ENCODE measurements at regions of chr9 and their contacts with region 1.

Region 1: DNA sequence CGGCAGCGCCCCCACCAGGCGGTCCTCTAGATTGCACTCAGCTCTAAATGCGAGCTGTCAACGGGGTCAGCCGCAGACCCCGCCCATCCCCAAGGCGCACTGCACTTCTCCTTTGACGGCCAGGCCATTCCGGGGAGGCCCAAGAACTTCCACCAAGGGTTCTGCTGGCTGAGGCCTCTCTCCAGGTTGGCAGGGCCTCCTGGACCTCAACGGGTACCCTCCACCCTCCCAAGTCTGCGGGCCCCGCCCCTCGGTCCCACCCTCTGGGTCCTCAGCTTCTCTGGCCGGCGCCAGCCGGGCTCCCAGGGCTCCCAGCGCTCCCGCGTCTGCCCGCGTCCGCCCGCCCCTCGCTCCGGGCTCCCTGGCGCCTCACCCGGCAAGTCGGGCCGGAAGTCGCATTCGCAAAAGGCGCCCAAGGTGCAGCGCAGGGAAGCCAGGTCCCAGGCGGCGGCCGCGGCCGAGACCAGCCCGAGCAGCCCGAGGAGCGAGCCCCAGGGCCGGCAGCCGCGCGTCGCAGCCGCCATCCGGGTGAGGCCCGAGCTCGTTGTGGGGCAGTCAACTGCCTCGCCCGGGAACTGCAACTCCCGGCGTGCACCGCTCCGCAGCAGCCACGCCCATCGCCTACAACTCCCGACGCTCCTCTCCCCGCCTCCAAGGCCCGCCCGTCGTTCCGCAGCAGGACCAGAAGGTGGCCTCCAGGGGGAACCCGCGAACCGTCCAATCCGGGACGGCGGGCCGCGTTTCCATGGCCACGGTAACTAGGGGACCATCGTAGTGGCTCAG is at the start of gene TOR2A:
- DNase-seq: peak; percentile 96 to 98
- H3K4me3 ChIP-seq: peak within 1 kb of the TSS; percentile 69
- H3K4me3 Mint-ChIP-seq: peak within 1 kb of the TSS; percentile 68
- H3K27ac Mint-ChIP-seq: no peak within 1 kb of the TSS
- H3K4me1 ChIP-seq: no peaks in the 10 kb centered on the region
- H3K4me1 Mint-ChIP-seq: no peaks in the 10 kb centered on the region
- H3K27me3 ChIP-seq: no peaks in the 10 kb centered on the region; the same call in 1 of the 2 replicates
- H3K27me3 Mint-ChIP-seq: peaks cover 10% of the 10 kb centered on the region
- CTCF ChIP-seq: peak; percentile 92
- total RNA-seq, gene TOR2A: 12.9 and 14.2 TPM in 2 replicates

Region 2: GRCh38 chr9:127503947-127504782 is 230.8 kb before region 1 on chr9:
- CTCF ChIA-PET with region 1: interaction called, 6 read pairs
- POLR2A ChIA-PET with region 1: no interaction called
- intact Hi-C with region 1: loop called (anchors 2 kb)
- DNase-seq: peak; percentile 87
- H3K4me3 ChIP-seq: no peak overlapping the region
- H3K4me3 Mint-ChIP-seq: no peak overlapping the region
- H3K27ac Mint-ChIP-seq: no peak overlapping the region
- H3K4me1 ChIP-seq: no peaks in the 10 kb centered on the region
- H3K4me1 Mint-ChIP-seq: no peaks in the 10 kb centered on the region
- H3K27me3 ChIP-seq: no peaks in the 10 kb centered on the region
- H3K27me3 Mint-ChIP-seq: no peaks in the 10 kb centered on the region
- CTCF ChIP-seq: peak; percentile 90 to 94

Region 3: GRCh38 chr9:127608104-127608966 is 126.6 kb before region 1 on chr9:
- CTCF ChIA-PET with region 1: interaction called, 20 read pairs
- POLR2A ChIA-PET with region 1: interaction called, 3 read pairs
- intact Hi-C with region 1: no loop called
- DNase-seq: peak; percentile 89
- H3K4me3 ChIP-seq: peak overlapping the region; percentile 48
- H3K4me3 Mint-ChIP-seq: peak overlapping the region; percentile 85
- H3K27ac Mint-ChIP-seq: no peak overlapping the region
- H3K4me1 ChIP-seq: peaks cover 8% of the 10 kb centered on the region; the same call in 1 of the 2 replicates
- H3K4me1 Mint-ChIP-seq: peaks cover 11% of the 10 kb centered on the region
- H3K27me3 ChIP-seq: peaks cover 2% of the 10 kb centered on the region
- H3K27me3 Mint-ChIP-seq: peaks cover 18% of the 10 kb centered on the region
- CTCF ChIP-seq: no peak

Region 4: GRCh38 chr9:127754099-127755050 is 19.4 kb after region 1 on chr9:
- CTCF ChIA-PET with region 1: interaction called, 10 read pairs
- POLR2A ChIA-PET with region 1: no interaction called
- intact Hi-C with region 1: no loop called
- DNase-seq: no peak
- H3K4me3 ChIP-seq: peak overlapping the region; percentile 14
- H3K4me3 Mint-ChIP-seq: peak overlapping the region; percentile 24
- H3K27ac Mint-ChIP-seq: no peak overlapping the region
- H3K4me1 ChIP-seq: 0 out of 2 replicates have a peak, but pooled peaks cover 3% of the 10 kb centered on the region
- H3K4me1 Mint-ChIP-seq: no peaks in the 10 kb centered on the region
- H3K27me3 ChIP-seq: peaks cover 2% of the 10 kb centered on the region
- H3K27me3 Mint-ChIP-seq: peaks cover 18% of the 10 kb centered on the region
- CTCF ChIP-seq: no peak

Region 5: GRCh38 chr9:127802576-127803443 is 67.9 kb after region 1 on chr9 and contains the start of gene FPGS:
- CTCF ChIA-PET with region 1: interaction called, 14 read pairs
- POLR2A ChIA-PET with region 1: no interaction called
- intact Hi-C with region 1: no loop called
- DNase-seq: peak; percentile 89 to 90
- H3K4me3 ChIP-seq: peak within 1 kb of the TSS; percentile 86
- H3K4me3 Mint-ChIP-seq: peak within 1 kb of the TSS; percentile 86
- H3K27ac Mint-ChIP-seq: peak within 1 kb of the TSS; percentile 77
- H3K4me1 ChIP-seq: peaks cover 26% of the 10 kb centered on the region
- H3K4me1 Mint-ChIP-seq: peaks cover 14% of the 10 kb centered on the region
- H3K27me3 ChIP-seq: no peaks in the 10 kb centered on the region
- H3K27me3 Mint-ChIP-seq: no peaks in the 10 kb centered on the region
- CTCF ChIP-seq: peak in 1 of 2 experiments; percentile 4
- total RNA-seq, gene FPGS: 54.4 and 57.3 TPM in 2 replicates

Region 6: DNA sequence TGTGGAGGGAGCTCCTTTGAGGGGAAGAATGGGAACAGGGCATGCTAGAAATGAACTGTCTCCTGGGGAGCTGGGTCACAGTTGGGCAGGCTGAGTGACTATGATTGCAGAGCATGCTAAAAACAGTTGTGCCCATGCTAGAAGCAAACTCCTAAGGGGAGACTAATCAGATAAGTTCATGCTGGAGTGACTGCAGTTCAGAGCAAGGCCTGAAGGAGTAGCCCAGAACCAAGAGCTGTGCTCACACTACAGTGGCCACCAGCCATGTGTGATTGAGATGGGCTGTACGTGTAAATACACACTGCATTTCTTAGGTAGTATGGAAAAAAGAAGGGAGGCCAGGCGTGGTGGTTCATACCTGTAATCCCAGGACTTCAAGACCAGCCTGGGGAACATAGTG is 152.9 kb after region 1 on chr9:
- CTCF ChIA-PET with region 1: no interaction called
- POLR2A ChIA-PET with region 1: no interaction called
- intact Hi-C with region 1: no loop called
- DNase-seq: no peak
- H3K4me3 ChIP-seq: no peak overlapping the region
- H3K4me3 Mint-ChIP-seq: no peak overlapping the region
- H3K27ac Mint-ChIP-seq: no peak overlapping the region
- H3K4me1 ChIP-seq: no peaks in the 10 kb centered on the region
- H3K4me1 Mint-ChIP-seq: peaks cover 7% of the 10 kb centered on the region
- H3K27me3 ChIP-seq: no peaks in the 10 kb centered on the region
- H3K27me3 Mint-ChIP-seq: no peaks in the 10 kb centered on the region
- CTCF ChIP-seq: peak in 1 of 2 experiments; percentile 14

Region 7: DNA sequence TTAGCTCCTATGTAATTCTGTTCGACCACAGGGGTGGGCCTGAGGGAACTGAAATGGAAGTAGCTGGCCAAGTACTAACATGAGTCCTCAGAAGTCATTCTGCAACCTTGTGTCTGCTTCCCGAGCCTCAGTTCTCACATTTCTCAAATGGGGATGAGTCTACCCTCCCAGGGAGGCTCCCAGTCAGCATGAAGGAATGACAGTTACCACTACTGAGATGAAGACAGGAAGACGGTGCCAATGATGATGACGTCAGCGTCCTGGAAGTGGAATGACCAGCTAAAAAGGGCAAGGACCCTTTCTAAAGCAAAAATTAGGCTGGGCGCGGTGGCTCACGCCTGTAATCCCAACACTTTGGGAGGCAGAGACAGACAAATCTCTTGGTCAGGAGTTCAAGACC is 188.8 kb after region 1 on chr9:
- CTCF ChIA-PET with region 1: interaction called, 9 read pairs
- POLR2A ChIA-PET with region 1: interaction called, 13 read pairs
- intact Hi-C with region 1: loop called (anchors 5 kb)
- DNase-seq: no peak
- H3K4me3 ChIP-seq: no peak overlapping the region
- H3K4me3 Mint-ChIP-seq: no peak overlapping the region
- H3K27ac Mint-ChIP-seq: no peak overlapping the region
- H3K4me1 ChIP-seq: peaks cover 10% of the 10 kb centered on the region
- H3K4me1 Mint-ChIP-seq: peaks cover 6% of the 10 kb centered on the region
- H3K27me3 ChIP-seq: no peaks in the 10 kb centered on the region
- H3K27me3 Mint-ChIP-seq: peaks cover 8% of the 10 kb centered on the region
- CTCF ChIP-seq: no peak

Measured in Caco-2 (cell line).